ENCODE measurements at regions of chr12 and their contacts with region 1.

Region 1: GRCh38 chr12:79555028-79555930 is 135.5 kb downstream of the PAWR start:
- DNase-seq: no peak
- ATAC-seq: peak; percentile 50

Region 2: DNA sequence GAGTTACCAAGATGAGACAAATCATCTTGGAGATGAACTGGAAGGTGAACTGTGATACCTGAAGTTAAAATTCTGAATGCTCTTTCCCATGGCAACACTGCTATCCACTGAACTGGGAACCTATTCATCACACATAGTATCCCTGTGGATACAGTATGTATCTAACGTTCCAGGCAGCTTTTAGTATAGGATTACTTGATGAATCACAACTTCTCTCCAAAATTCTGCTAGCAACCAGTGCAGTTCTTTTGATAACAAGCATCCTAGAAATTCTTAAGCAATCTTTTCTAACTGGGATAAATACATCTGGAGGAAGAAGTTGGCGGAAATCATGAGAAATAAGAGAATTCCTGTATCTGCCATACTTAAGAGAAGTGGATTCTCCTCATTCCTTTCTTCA is 69.1 kb after region 1 on chr12:
- intact Hi-C with region 1: no loop called
- DNase-seq: no peak
- ATAC-seq: no peak

Region 3: DNA sequence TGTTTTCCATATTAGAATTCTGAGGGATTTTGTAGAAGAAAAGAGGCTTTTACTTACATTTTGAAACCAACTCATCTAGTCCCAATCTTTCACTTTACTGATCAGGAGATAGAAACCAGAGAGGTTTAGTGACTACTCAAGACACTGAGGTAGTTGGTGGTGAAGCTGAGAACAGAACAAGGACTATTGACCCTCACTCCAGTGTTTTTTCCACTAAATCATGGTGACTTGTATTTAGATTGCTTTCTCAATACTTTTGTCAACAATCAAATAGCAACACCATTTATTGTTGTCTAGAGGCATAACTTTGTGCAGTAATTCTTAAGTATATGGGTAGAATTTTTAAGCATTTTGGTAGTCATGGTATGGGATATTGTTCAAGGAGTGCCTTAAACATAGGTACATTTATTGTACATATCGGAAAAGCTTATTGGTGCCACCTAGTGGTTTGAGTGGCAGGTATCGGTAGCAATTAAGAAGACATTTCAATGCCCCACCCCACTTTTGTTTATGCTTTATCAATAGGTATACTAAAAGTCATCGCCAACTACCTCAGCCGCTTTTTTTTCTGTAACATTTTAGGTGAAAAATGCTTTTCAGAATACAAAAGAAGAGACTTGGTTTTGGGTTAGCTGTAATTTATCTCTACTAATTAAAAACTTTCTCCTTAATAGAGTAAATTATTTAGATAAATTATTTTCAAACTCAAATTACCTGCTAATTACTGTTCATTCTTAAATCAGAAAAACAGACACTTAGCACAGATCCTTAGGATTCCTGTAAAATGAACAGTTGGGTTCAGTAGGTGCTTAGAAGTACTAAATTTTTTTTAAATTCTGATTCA is 182.8 kb after region 1 on chr12:
- intact Hi-C with region 1: loop called (anchors 5 kb)
- DNase-seq: no peak
- ATAC-seq: peak; percentile 53

Region 4: GRCh38 chr12:80186727-80187217 is 631.5 kb after region 1 on chr12:
- intact Hi-C with region 1: loop called (anchors 5 kb)
- DNase-seq: no peak
- ATAC-seq: peak; percentile 95

Region 5: GRCh38 chr12:80269803-80270552 is 714.7 kb after region 1 on chr12:
- intact Hi-C with region 1: loop called (anchors 10 kb)
- DNase-seq: no peak
- ATAC-seq: peak; percentile 71